ENCODE measurements at regions of chr1 and their contacts with region 1.

Region 1: GRCh38 chr1:210292231-210292871 is 36.4 kb upstream of the HHAT start:
- DNase-seq: no peak
- H3K4me3 ChIP-seq: peak overlapping the region; percentile 49 to 63 (median 56)
- H3K27ac ChIP-seq: peak overlapping the region; percentile 70 to 82 (median 80)
- H3K4me1 ChIP-seq: peaks cover 42 to 47% (median 45%) of the 10 kb centered on the region in 4 donors
- H3K27me3 ChIP-seq: no peaks in the 10 kb centered on the region
- CTCF ChIP-seq: peak; percentile 32 to 43 (median 36)
- EP300 ChIP-seq: no peak
- POLR2A ChIP-seq: no peak

Region 2: DNA sequence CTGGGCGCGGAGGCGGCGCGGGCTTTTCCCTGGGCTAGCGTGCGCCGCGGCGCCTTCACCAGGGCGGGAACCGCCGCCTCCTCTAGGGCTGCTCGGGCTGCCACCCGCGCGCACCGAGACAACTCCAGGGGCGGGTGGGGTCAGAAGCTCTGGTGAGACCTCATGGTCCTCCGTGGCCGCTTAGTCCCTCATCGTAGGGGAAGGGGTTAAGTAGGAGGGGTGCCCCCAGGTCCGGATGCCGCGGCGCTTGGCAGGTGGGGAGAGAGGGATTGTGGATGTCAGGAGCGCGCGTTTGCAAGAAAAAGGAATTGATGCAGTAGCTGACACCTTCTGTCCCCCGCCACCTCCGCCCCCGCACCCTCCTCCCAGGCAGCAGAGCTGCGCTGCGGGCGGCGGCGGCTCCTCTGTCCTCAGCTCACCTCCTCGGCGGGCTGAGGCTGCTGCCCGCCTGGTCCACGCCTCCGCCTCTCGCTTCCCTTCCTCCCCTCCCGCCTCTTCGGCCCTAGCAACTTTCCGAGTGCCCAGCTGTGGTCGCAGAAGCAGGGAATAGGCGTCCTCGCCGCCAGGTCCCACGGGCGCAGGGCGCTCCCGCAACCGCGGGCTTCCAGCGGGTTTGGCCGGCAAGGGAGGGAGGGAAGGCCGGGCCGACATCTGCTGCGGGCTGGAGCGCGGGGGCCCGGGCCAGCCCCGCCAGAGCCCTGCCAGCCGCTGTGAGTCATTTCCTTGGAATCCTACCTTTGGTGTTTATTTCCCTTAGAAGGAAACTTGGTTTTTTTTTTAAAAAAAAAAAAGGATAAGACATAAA is 58.9 kb before region 1 on chr1:
- intact Hi-C with region 1: loop called (anchors 5 kb)
- DNase-seq: peak; percentile 91
- H3K4me3 ChIP-seq: peak overlapping the region; percentile 72 to 85 (median 78)
- H3K27ac ChIP-seq: peak overlapping the region; percentile 81 to 90 (median 88)
- H3K4me1 ChIP-seq: peaks cover 29 to 68% (median 66%) of the 10 kb centered on the region in 4 donors
- H3K27me3 ChIP-seq: peaks cover 0 to 3% (median 0%) of the 10 kb centered on the region in 4 donors
- CTCF ChIP-seq: no peak
- EP300 ChIP-seq: no peak
- POLR2A ChIP-seq: no peak

Region 3: GRCh38 chr1:210448297-210448892 is 156.0 kb after region 1 on chr1:
- intact Hi-C with region 1: no loop called
- DNase-seq: no peak
- H3K4me3 ChIP-seq: no peak overlapping the region
- H3K27ac ChIP-seq: no peak overlapping the region
- H3K4me1 ChIP-seq: no peaks in the 10 kb centered on the region
- H3K27me3 ChIP-seq: no peaks in the 10 kb centered on the region
- CTCF ChIP-seq: peak; percentile 32 to 52 (median 46)
- EP300 ChIP-seq: no peak
- POLR2A ChIP-seq: no peak

Measured in esophagus muscularis mucosa (tissue), 4 donors.